HEK293T (cell line): ENCODE measurements at regions of chr5 and their contacts with region 1.

Region 1: GRCh38 chr5:90446961-90447360 is 27.6 kb downstream of the MBLAC2 start:
- DNase-seq: no peak

Region 2: DNA sequence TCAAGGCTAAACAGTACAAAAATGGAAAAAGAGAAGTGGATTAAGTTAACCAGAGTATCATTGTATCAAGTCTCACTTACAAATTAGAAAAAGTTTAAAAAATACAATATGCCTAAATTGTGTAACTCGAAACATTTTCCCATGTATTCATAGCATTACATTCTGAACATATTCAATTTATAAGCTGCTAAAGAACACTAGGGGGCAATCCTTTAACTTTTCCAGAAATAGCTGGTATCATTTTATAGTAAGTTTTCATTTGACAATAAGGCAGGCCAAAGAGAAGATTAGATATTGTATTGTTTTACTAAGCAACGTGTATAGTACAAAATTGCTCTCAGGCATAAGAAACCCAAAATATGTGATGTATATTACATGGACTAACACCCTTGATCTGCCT is 346.2 kb after region 1 on chr5:
- CTCF ChIA-PET with region 1: interaction called, 11 read pairs
- POLR2A ChIA-PET with region 1: no interaction called
- DNase-seq: no peak